CD4-positive, alpha-beta T cell (primary cell): ENCODE measurements at regions of chr16 and their contacts with region 1.

Region 1: GRCh38 chr16:24504472-24505345 is 34.7 kb upstream of the RBBP6 start:
- DNase-seq: peak; percentile 18 to 79 (median 30)
- ATAC-seq: peak; percentile 81
- H3K4me3 ChIP-seq: no peak overlapping the region
- H3K4me3 Mint-ChIP-seq: no peak overlapping the region
- H3K27ac ChIP-seq: no peak overlapping the region
- H3K27ac Mint-ChIP-seq: no peak overlapping the region
- H3K4me1 ChIP-seq: no peaks in the 10 kb centered on the region
- H3K4me1 Mint-ChIP-seq: no peaks in the 10 kb centered on the region
- H3K27me3 ChIP-seq: peaks cover 0 to 6% of the 10 kb centered on the region in 2 experiments
- H3K27me3 Mint-ChIP-seq: peaks cover 24% of the 10 kb centered on the region
- CTCF ChIP-seq: peak; percentile 71

Region 2: GRCh38 chr16:23734176-23734893 is 770.4 kb before region 1 on chr16:
- CTCF ChIA-PET with region 1: no interaction called
- POLR2A ChIA-PET with region 1: no interaction called
- intact Hi-C with region 1: loop called (anchors 2 to 5 kb)
- DNase-seq: no peak
- ATAC-seq: no peak
- H3K4me3 ChIP-seq: no peak overlapping the region
- H3K4me3 Mint-ChIP-seq: no peak overlapping the region
- H3K27ac ChIP-seq: no peak overlapping the region
- H3K27ac Mint-ChIP-seq: no peak overlapping the region
- H3K4me1 ChIP-seq: peaks cover 3% of the 10 kb centered on the region
- H3K4me1 Mint-ChIP-seq: no peaks in the 10 kb centered on the region
- H3K27me3 ChIP-seq: no peaks in the 10 kb centered on the region
- H3K27me3 Mint-ChIP-seq: peaks cover 22% of the 10 kb centered on the region
- CTCF ChIP-seq: no peak

Region 3: GRCh38 chr16:23739516-23739915 is 765.2 kb before region 1 on chr16:
- CTCF ChIA-PET with region 1: no interaction called
- POLR2A ChIA-PET with region 1: no interaction called
- intact Hi-C with region 1: loop called (anchors 2 to 5 kb)
- DNase-seq: no peak
- ATAC-seq: no peak
- H3K4me3 ChIP-seq: no peak overlapping the region
- H3K4me3 Mint-ChIP-seq: no peak overlapping the region
- H3K27ac ChIP-seq: no peak overlapping the region
- H3K27ac Mint-ChIP-seq: no peak overlapping the region
- H3K4me1 ChIP-seq: peaks cover 3% of the 10 kb centered on the region
- H3K4me1 Mint-ChIP-seq: no peaks in the 10 kb centered on the region
- H3K27me3 ChIP-seq: peaks cover 5 to 7% of the 10 kb centered on the region in 2 experiments
- H3K27me3 Mint-ChIP-seq: peaks cover 39% of the 10 kb centered on the region
- CTCF ChIP-seq: no peak

Region 4: DNA sequence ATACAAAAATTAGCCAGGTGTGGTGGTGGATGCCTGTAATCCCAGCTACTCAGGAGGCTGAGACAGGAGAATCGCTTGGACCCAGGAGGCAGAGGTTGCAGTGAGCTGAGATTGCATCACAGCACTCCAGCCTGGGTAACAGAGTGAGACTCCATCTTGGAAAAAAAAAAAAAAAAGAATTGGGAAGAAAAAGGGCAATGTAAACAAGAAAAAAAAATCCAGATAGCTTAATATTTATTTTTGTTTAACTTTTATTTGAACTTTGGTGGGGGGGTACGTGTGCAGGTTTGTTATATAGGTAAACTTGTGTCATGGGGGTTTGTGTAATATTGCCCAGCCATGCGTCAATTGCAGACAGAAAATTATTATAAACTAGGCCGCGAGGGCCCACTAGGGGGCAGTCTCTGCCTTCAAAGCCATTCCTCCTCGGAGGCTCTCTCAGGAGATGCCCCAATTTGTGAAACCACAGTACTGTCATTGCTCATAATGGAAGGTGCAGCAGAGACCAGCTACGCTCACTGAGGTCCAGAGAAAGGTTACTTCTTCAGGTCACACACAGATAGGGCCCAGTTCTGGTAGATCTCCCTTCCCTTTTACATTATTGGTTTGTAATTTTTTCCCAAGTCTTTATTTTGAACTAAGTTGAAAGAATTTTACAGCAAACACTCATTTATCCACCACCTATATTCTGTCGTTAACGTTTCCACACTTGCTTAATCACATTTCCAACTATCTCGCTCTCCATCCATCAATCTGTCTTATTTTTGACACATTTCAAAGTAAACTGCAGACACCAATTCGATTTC is 462.7 kb before region 1 on chr16:
- CTCF ChIA-PET with region 1: no interaction called
- POLR2A ChIA-PET with region 1: no interaction called
- intact Hi-C with region 1: loop called in 1 of 2 experiments (anchors 2 kb)
- DNase-seq: peak; percentile 50 to 82 (median 68)
- ATAC-seq: peak; percentile 78
- H3K4me3 ChIP-seq: no peak overlapping the region
- H3K4me3 Mint-ChIP-seq: no peak overlapping the region
- H3K27ac ChIP-seq: no peak overlapping the region
- H3K27ac Mint-ChIP-seq: no peak overlapping the region
- H3K4me1 ChIP-seq: no peaks in the 10 kb centered on the region
- H3K4me1 Mint-ChIP-seq: peaks cover 8% of the 10 kb centered on the region
- H3K27me3 ChIP-seq: no peaks in the 10 kb centered on the region
- H3K27me3 Mint-ChIP-seq: no peaks in the 10 kb centered on the region
- CTCF ChIP-seq: peak; percentile 71

Region 5: DNA sequence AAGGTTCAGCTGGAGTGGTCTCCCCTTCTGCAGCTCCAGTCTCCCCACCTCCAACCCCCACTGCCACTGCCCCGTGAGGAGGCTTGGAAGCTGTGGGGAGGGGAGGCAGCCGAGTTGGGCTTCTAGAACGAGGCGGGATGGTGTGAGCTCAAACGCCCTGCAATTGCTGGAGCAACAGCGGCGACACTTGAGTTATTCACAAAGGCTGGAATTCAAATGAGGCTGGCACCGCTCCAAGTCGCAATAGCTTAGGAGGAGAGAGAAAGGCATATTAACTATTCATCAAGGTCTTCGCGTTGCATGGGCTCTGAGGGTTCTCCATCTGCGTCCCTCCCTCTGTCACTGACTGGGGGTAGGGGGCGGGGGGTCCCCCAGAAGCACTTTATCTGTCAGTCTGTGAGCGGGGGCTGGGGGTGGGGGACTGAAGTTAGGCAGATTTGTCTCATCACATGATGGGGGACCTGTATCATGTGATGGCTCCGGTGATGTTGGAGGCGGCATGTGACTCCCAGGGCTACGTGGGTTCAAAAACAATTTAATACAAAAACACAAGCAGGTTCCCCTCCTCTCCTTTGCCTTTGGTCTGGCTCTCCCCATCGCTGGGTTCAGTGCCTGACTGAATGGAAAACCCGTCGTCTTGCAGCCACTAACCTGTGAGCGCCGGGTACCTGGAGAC is 105.2 kb after region 1 on chr16:
- CTCF ChIA-PET with region 1: no interaction called
- POLR2A ChIA-PET with region 1: no interaction called
- intact Hi-C with region 1: no loop called
- DNase-seq: peak in 2 of 14 experiments; percentile 4 to 5
- ATAC-seq: no peak
- H3K4me3 ChIP-seq: no peak overlapping the region
- H3K4me3 Mint-ChIP-seq: peak overlapping the region; percentile 35
- H3K27ac ChIP-seq: no peak overlapping the region
- H3K27ac Mint-ChIP-seq: no peak overlapping the region
- H3K4me1 ChIP-seq: peaks cover 7% of the 10 kb centered on the region
- H3K4me1 Mint-ChIP-seq: peaks cover 10% of the 10 kb centered on the region
- H3K27me3 ChIP-seq: peaks cover 22 to 38% of the 10 kb centered on the region in 2 experiments
- H3K27me3 Mint-ChIP-seq: peaks cover 73% of the 10 kb centered on the region
- CTCF ChIP-seq: no peak